Mammary epithelial cell (primary cell): ENCODE measurements at regions of chr6 and their contacts with region 1.

Region 1: DNA sequence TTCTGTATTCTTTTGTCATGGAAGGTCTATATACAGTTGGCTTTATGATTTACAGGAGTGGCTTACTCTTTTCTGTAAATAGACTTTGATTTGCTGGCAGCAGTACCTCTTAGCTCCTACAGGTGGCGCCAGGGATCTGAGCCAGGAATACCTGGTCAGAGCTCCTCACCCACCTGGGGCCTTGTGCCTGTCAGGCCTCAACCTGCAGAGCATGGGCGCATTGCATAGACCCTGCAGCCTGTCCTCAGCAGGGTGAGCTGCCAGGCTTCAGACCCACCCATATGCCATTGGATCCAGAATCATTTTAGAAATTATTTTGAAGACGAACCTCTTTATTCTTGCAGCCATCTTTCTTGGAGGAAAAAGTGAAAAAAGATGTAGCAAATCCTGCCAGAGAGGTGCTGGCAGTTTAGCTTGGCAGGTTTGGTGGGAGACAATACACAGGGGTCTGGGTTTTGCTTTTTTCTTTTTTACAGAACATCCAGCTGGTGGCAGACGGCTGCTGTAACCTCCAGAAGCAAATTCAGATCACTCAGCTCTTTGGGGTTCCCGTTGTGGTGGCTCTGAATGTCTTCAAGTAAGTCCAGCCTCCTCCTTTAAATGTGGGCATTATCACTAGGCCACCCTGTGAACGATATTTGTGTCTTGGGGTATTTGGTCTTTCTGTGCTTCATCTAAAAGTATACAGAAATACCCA is 149.1 kb downstream of the MTHFD1L start:
- DNase-seq: peak; percentile 53
- H3K4me3 ChIP-seq: no peak overlapping the region
- H3K27ac ChIP-seq: no peak overlapping the region
- H3K4me1 ChIP-seq: no peaks in the 10 kb centered on the region
- H3K27me3 ChIP-seq: no peaks in the 10 kb centered on the region
- CTCF ChIP-seq: peak; percentile 99

Region 2: GRCh38 chr6:151112130-151112529 is 97.6 kb after region 1 on chr6:
- CTCF ChIA-PET with region 1: no interaction called
- dilution Hi-C with region 1: no loop called
- in situ Hi-C with region 1: no loop called
- intact Hi-C with region 1: loop called (anchors 2 kb)
- DNase-seq: no peak
- H3K4me3 ChIP-seq: no peak overlapping the region
- H3K27ac ChIP-seq: no peak overlapping the region
- H3K4me1 ChIP-seq: no peaks in the 10 kb centered on the region
- H3K27me3 ChIP-seq: no peaks in the 10 kb centered on the region
- CTCF ChIP-seq: no peak

Region 3: DNA sequence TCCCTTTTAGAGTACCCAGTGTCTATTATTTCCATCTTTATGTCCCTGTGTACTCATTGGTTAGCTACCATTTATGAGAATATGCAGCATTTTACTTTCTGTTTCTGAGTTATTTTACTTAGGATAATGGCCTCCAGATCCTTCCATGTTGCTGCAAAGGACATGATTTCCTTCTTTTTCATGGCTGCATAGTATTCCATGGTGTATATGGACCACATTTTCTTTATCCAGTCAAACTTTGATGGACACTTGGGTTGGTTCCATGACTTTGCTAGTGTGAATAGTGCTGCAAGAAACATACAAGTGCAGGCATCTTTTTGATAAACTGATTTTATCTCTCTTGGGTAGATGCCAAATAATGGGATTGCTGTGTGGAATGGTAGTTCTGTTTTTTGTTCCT is 321.4 kb after region 1 on chr6:
- CTCF ChIA-PET with region 1: no interaction called
- dilution Hi-C with region 1: no loop called
- in situ Hi-C with region 1: no loop called
- intact Hi-C with region 1: loop called (anchors 1 kb)
- DNase-seq: no peak
- H3K4me3 ChIP-seq: no peak overlapping the region
- H3K27ac ChIP-seq: no peak overlapping the region
- H3K4me1 ChIP-seq: no peaks in the 10 kb centered on the region
- H3K27me3 ChIP-seq: no peaks in the 10 kb centered on the region
- CTCF ChIP-seq: no peak